ENCODE measurements at regions of chr7 and their contacts with region 1.

Region 1: GRCh38 chr7:149067876-149068275 is 22.6 kb downstream of the ZNF786 start:
- DNase-seq: no peak
- H3K4me3 Mint-ChIP-seq: no peak overlapping the region
- H3K27ac Mint-ChIP-seq: no peak overlapping the region
- H3K4me1 Mint-ChIP-seq: peaks cover 9% of the 10 kb centered on the region
- H3K27me3 Mint-ChIP-seq: no peaks in the 10 kb centered on the region

Region 2: DNA sequence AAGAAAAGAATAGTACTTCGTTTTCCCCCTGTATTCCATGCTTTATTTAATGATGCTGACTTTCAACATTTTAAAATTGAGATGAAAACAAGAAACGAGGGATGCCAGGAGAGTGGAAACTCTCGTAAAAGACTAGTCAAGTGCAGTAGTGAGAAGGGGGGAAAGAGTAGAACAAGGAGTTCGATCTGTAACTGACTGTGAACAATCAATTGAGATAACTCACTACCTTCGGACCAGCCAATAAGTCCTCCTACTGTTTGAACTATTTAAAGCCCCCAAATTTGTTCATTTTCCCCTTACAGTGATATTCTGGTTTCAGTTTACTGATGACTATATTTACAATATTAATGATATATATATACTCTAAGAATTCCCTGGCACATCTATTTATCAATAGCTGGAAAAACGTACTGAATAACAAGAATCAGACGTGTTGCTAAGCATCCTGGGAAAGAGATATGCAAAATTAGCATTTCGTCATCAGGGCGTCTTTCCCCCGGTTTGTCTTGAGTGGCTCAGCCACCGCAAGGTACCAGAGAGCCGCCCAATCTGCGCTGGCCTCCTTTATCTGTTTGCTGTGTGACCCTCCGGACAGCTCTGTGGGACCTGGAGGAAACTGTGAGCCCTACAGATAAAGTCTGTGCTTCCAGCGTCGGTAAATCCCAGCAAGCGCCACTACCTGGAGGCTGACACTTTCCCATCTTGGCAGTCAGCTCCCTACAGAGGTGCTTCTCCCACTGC is 80.7 kb before region 1 on chr7:
- intact Hi-C with region 1: loop called (anchors 5 kb)
- DNase-seq: peak; percentile 94
- H3K4me3 Mint-ChIP-seq: peak overlapping the region; percentile 95
- H3K27ac Mint-ChIP-seq: peak overlapping the region; percentile 94
- H3K4me1 Mint-ChIP-seq: peaks cover 41% of the 10 kb centered on the region
- H3K27me3 Mint-ChIP-seq: peaks cover 23% of the 10 kb centered on the region

Region 3: GRCh38 chr7:149005241-149006050 is 62.4 kb before region 1 on chr7:
- intact Hi-C with region 1: loop called (anchors 1 kb)
- DNase-seq: peak; percentile 93
- H3K4me3 Mint-ChIP-seq: no peak overlapping the region
- H3K27ac Mint-ChIP-seq: no peak overlapping the region
- H3K4me1 Mint-ChIP-seq: peaks cover 2% of the 10 kb centered on the region
- H3K27me3 Mint-ChIP-seq: no peaks in the 10 kb centered on the region

Region 4: GRCh38 chr7:149104749-149105148 is 36.9 kb after region 1 on chr7:
- intact Hi-C with region 1: no loop called
- DNase-seq: no peak
- H3K4me3 Mint-ChIP-seq: no peak overlapping the region
- H3K27ac Mint-ChIP-seq: no peak overlapping the region
- H3K4me1 Mint-ChIP-seq: no peaks in the 10 kb centered on the region
- H3K27me3 Mint-ChIP-seq: no peaks in the 10 kb centered on the region